Heart right ventricle (tissue), 16 donors: ENCODE measurements at regions of chr2 and their contacts with region 1.

Region 1: DNA sequence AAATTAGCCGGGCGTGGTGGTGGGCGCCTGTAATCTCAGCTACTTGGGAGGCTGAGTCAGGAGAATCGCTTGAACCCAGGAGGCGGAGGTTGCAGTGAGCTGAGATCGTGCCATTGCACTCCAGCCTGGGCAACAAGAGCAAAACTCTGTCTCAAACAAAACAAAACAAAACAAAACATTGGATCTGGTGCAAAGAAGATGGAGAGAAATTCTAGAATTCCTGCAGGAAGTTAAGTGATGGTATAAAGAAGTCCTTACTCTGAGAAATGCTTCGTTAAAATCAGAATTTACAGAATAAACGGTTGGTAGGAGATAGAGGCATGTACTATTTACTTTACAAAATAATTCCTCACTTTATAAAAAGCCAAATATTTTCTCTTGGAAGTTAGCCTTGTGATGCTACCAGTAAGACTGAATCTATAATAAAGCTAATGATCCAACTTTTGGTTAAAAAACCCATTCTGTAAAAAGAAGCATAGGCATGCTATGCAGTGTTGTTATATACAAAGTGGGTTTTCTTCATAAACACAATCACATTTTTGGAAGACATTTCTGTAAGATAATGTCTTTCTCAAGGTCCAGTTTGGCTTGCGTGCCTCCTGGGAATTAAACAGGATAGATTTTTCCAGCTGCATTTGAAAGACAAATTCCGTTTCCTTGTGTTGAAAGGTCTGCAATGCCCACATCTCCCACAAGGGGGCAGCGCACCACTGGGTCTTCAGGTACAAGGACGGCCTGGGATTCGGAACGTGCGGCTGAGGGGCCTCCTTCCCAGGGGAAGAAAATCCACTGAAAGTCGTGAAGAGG is 35.6 kb upstream of the PNO1 start:
- DNase-seq: peak; percentile 86 to 88
- ATAC-seq: peak in 7 of 8 donors; percentile 64 to 87 (median 84)
- H3K4me3 ChIP-seq: peak overlapping the region in 2 of 10 donors; percentile 5 to 14
- H3K27ac ChIP-seq: no peak overlapping the region
- H3K4me1 ChIP-seq: peaks cover 0 to 13% (median 8%) of the 10 kb centered on the region in 9 donors
- H3K27me3 ChIP-seq: no peaks in the 10 kb centered on the region
- CTCF ChIP-seq: peak in 8 of 9 donors; percentile 92 to 98 (median 98)

Region 2: GRCh38 chr2:68157402-68158133 is 35.5 kb after region 1 on chr2 and contains the start of gene PNO1:
- intact Hi-C with region 1: no loop called
- DNase-seq: peak; percentile 93 to 98
- ATAC-seq: peak; percentile 97 to 99 (median 98)
- H3K4me3 ChIP-seq: peak within 1 kb of the TSS; percentile 59 to 96 (median 80)
- H3K27ac ChIP-seq: peak within 1 kb of the TSS; percentile 83 to 95 (median 91)
- H3K4me1 ChIP-seq: peaks cover 0 to 49% (median 39%) of the 10 kb centered on the region in 9 donors
- H3K27me3 ChIP-seq: no peaks in the 10 kb centered on the region
- CTCF ChIP-seq: no peak
- total RNA-seq, gene PNO1: 5.7 to 13.2 (median 8.6) TPM

Region 3: GRCh38 chr2:68190991-68191731 is 69.1 kb after region 1 on chr2:
- intact Hi-C with region 1: loop called in 1 of 10 experiments (anchors 5 kb)
- DNase-seq: no peak
- ATAC-seq: no peak
- H3K4me3 ChIP-seq: no peak overlapping the region
- H3K27ac ChIP-seq: no peak overlapping the region
- H3K4me1 ChIP-seq: peaks cover 0 to 76% (median 26%) of the 10 kb centered on the region in 9 donors
- H3K27me3 ChIP-seq: no peaks in the 10 kb centered on the region
- CTCF ChIP-seq: no peak

Region 4: GRCh38 chr2:68203587-68203986 is 81.5 kb after region 1 on chr2:
- intact Hi-C with region 1: no loop called
- DNase-seq: no peak
- ATAC-seq: no peak
- H3K4me3 ChIP-seq: no peak overlapping the region
- H3K27ac ChIP-seq: peak overlapping the region in 2 of 10 donors; percentile 23 to 67
- H3K4me1 ChIP-seq: peaks cover 0 to 66% (median 28%) of the 10 kb centered on the region in 9 donors
- H3K27me3 ChIP-seq: no peaks in the 10 kb centered on the region
- CTCF ChIP-seq: no peak

Region 5: GRCh38 chr2:68282811-68283418 is 160.8 kb after region 1 on chr2:
- intact Hi-C with region 1: loop called (anchors 1 to 10 kb)
- DNase-seq: no peak
- ATAC-seq: peak in 1 of 8 donors; percentile 59
- H3K4me3 ChIP-seq: no peak overlapping the region
- H3K27ac ChIP-seq: no peak overlapping the region
- H3K4me1 ChIP-seq: peaks cover 0 to 38% (median 18%) of the 10 kb centered on the region in 9 donors
- H3K27me3 ChIP-seq: no peaks in the 10 kb centered on the region
- CTCF ChIP-seq: peak; percentile 49 to 84 (median 74)

Region 6: GRCh38 chr2:68434981-68435380 is 312.9 kb after region 1 on chr2:
- intact Hi-C with region 1: loop called in 6 of 10 experiments (anchors 2 to 10 kb)
- DNase-seq: no peak
- ATAC-seq: peak in 1 of 8 donors; percentile 41
- H3K4me3 ChIP-seq: no peak overlapping the region
- H3K27ac ChIP-seq: peak overlapping the region in 1 of 10 donors; percentile 70
- H3K4me1 ChIP-seq: peaks cover 0 to 33% (median 20%) of the 10 kb centered on the region in 9 donors
- H3K27me3 ChIP-seq: no peaks in the 10 kb centered on the region
- CTCF ChIP-seq: no peak